Naive thymus-derived CD4-positive, alpha-beta T cell (primary cell): ENCODE measurements at regions of chr4 and their contacts with region 1.

Region 1: GRCh38 chr4:183444214-183445066 is at the start of gene CDKN2AIP:
- DNase-seq: peak; percentile 92 to 97 (median 95)
- ATAC-seq: peak; percentile 93
- H3K4me3 ChIP-seq: peak within 1 kb of the TSS; percentile 81
- H3K4me3 Mint-ChIP-seq: peak within 1 kb of the TSS; percentile 94 to 99 (median 97)
- H3K27ac ChIP-seq: peak within 1 kb of the TSS; percentile 96
- H3K27ac Mint-ChIP-seq: peak within 1 kb of the TSS; percentile 97 to 98 (median 98)
- H3K4me1 ChIP-seq: peaks cover 30 to 33% of the 10 kb centered on the region in 2 donors
- H3K4me1 Mint-ChIP-seq: peaks cover 35 to 66% (median 51%) of the 10 kb centered on the region in 7 donors
- H3K27me3 ChIP-seq: no peaks in the 10 kb centered on the region
- H3K27me3 Mint-ChIP-seq: peaks cover 0 to 5% (median 0%) of the 10 kb centered on the region in 5 donors
- total RNA-seq, gene CDKN2AIP: 24.9 to 58.2 (median 44.4) TPM

Region 2: GRCh38 chr4:182917182-182918043 is 527.0 kb before region 1 on chr4 and contains the start of gene DCTD:
- CTCF ChIA-PET with region 1: no interaction called
- POLR2A ChIA-PET with region 1: interaction called, 5 read pairs
- intact Hi-C with region 1: loop called (anchors 1 to 2 kb)
- DNase-seq: peak; percentile 71 to 90 (median 80)
- ATAC-seq: peak; percentile 89
- H3K4me3 ChIP-seq: peak within 1 kb of the TSS; percentile 77
- H3K4me3 Mint-ChIP-seq: peak within 1 kb of the TSS; percentile 75 to 95 (median 90)
- H3K27ac ChIP-seq: peak within 1 kb of the TSS; percentile 89
- H3K27ac Mint-ChIP-seq: peak within 1 kb of the TSS; percentile 86 to 98 (median 92)
- H3K4me1 ChIP-seq: peaks cover 20 to 26% of the 10 kb centered on the region in 2 donors
- H3K4me1 Mint-ChIP-seq: peaks cover 17 to 58% (median 50%) of the 10 kb centered on the region in 7 donors
- H3K27me3 ChIP-seq: no peaks in the 10 kb centered on the region
- H3K27me3 Mint-ChIP-seq: peaks cover 0 to 6% (median 0%) of the 10 kb centered on the region in 5 donors
- total RNA-seq, gene DCTD: 61.4 to 76.2 (median 68.9) TPM

Region 3: DNA sequence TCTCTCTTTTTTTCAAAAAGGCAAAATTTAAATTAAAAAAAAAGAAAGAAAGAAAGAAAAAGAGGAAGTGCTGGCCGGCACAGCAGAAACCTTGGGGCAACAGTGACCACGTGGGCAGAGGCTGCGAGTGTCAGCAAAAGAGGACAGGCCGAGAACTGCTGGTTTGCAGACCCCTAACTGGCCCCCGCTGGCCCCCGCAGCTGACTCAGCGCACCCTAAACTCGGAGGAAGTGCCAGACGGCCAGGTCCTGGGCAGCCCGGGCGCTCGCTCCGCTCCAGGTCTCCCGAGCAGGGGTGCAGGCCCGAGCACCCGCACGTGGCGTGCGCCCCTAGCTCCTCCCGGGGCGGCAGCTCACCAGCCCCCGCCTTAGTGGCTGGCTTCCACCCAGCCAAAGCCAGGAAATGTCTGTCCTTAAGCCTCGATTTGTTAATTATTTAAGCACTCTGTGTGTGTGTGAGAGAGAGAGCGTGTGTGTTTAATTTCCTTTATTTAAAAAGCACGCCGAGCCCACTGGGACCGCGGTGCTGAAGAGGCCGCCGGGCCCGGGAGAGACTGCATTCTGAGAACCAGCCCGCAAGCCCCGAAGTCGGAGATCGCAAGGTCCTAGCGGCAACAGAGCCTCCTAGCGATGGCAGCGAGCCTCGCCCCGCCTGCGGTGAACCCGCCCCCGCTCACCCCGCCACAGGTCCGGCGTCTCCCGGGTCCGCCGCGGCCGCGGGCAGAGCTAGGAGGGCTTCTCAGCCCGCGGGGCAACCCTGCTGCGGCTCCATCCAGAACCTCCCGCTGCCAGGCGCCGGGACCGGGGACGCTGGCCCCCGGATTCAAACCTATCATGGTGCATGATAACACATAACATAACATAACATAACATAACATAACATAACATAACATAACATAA is 46.0 kb before region 1 on chr4:
- CTCF ChIA-PET with region 1: no interaction called
- POLR2A ChIA-PET with region 1: interaction called, 8 read pairs
- intact Hi-C with region 1: loop called (anchors 2 kb)
- DNase-seq: peak; percentile 32 to 70 (median 57)
- ATAC-seq: peak; percentile 88
- H3K4me3 ChIP-seq: peak overlapping the region; percentile 76
- H3K4me3 Mint-ChIP-seq: peak overlapping the region; percentile 86 to 93 (median 90)
- H3K27ac ChIP-seq: peak overlapping the region; percentile 34
- H3K27ac Mint-ChIP-seq: peak overlapping the region; percentile 65 to 95 (median 82)
- H3K4me1 ChIP-seq: peaks cover 0 to 6% of the 10 kb centered on the region in 2 donors
- H3K4me1 Mint-ChIP-seq: peaks cover 17 to 34% (median 28%) of the 10 kb centered on the region in 7 donors
- H3K27me3 ChIP-seq: no peaks in the 10 kb centered on the region
- H3K27me3 Mint-ChIP-seq: peaks cover 0 to 45% (median 0%) of the 10 kb centered on the region in 5 donors

Region 4: DNA sequence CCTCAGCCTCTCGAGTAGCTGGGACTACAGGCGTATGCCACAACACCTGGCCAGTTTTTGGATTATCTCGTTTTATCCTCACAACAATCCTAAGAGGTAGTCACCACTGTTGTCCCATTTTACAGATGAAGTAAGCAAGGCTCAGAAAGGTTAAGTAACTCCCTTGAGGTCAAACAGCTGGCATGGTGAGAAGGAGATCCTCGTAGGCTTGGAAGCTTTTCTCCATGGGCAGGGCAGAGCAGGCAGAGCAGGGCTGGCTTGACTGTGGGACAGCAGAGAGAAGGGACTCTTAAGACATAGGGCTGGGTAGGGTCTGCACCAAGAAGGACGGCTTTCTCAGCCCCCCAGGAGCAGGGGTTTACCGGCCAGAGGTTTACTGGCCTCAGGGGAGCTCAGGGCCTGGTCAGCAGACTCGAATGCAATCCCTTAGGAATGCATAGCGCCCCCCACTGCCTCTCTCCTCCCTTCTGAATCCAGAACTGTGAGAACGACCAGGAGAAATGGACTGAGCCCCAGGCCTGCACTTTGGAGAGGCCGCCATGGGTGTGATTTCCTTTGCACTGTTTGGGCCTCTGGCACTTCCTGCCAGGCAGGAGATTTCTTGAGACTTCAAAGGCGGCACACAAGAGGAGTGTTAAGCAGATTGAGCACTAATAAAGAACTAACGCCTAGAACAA is 14.0 kb before region 1 on chr4:
- CTCF ChIA-PET with region 1: interaction called, 8 read pairs
- POLR2A ChIA-PET with region 1: interaction called, 170 read pairs
- intact Hi-C with region 1: loop called (anchors 1 kb)
- DNase-seq: peak in 7 of 9 donors; percentile 25 to 51 (median 44)
- ATAC-seq: peak; percentile 68
- H3K4me3 ChIP-seq: peak overlapping the region; percentile 2
- H3K4me3 Mint-ChIP-seq: peak overlapping the region; percentile 63 to 77 (median 74)
- H3K27ac ChIP-seq: peak overlapping the region; percentile 52
- H3K27ac Mint-ChIP-seq: peak overlapping the region; percentile 78 to 95 (median 90)
- H3K4me1 ChIP-seq: peaks cover 16 to 44% of the 10 kb centered on the region in 2 donors
- H3K4me1 Mint-ChIP-seq: peaks cover 12 to 63% (median 51%) of the 10 kb centered on the region in 7 donors
- H3K27me3 ChIP-seq: no peaks in the 10 kb centered on the region
- H3K27me3 Mint-ChIP-seq: no peaks in the 10 kb centered on the region

Region 5: GRCh38 chr4:183471946-183472708 is 27.7 kb after region 1 on chr4:
- CTCF ChIA-PET with region 1: no interaction called
- POLR2A ChIA-PET with region 1: no interaction called
- intact Hi-C with region 1: loop called in 1 of 2 experiments (anchors 2 kb)
- DNase-seq: peak; percentile 51 to 81 (median 71)
- ATAC-seq: peak; percentile 89
- H3K4me3 ChIP-seq: no peak overlapping the region
- H3K4me3 Mint-ChIP-seq: peak overlapping the region in 1 of 10 donors; percentile 8
- H3K27ac ChIP-seq: no peak overlapping the region
- H3K27ac Mint-ChIP-seq: no peak overlapping the region
- H3K4me1 ChIP-seq: no peaks in the 10 kb centered on the region
- H3K4me1 Mint-ChIP-seq: peaks cover 0 to 9% (median 5%) of the 10 kb centered on the region in 7 donors
- H3K27me3 ChIP-seq: no peaks in the 10 kb centered on the region
- H3K27me3 Mint-ChIP-seq: peaks cover 0 to 10% (median 0%) of the 10 kb centered on the region in 5 donors

Region 6: DNA sequence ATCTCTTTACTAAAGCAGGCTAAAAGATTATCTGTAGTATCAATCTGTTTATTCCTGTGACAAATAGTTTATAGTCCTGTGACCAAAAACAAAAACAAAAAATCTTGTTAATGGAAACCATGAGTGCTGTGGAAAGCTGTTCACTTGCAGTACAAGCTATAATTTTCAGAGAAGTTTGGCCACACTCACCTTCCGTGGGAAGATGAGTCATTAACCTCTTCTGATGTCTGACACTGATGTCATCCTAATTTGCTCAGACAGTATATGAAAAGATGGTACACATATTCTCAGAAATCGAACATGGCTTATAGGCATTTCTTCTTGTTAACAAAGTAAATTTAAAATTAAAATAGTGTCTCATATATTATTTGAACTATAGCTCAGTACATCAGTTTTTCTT is 793.2 kb after region 1 on chr4:
- CTCF ChIA-PET with region 1: no interaction called
- POLR2A ChIA-PET with region 1: no interaction called
- intact Hi-C with region 1: loop called in 1 of 2 experiments (anchors 5 kb)
- DNase-seq: peak in 1 of 9 donors; percentile 31
- ATAC-seq: peak; percentile 45
- H3K4me3 ChIP-seq: no peak overlapping the region
- H3K4me3 Mint-ChIP-seq: peak overlapping the region in 1 of 10 donors; percentile 80
- H3K27ac ChIP-seq: no peak overlapping the region
- H3K27ac Mint-ChIP-seq: peak overlapping the region in 4 of 9 donors; percentile 19 to 93 (median 27)
- H3K4me1 ChIP-seq: no peaks in the 10 kb centered on the region
- H3K4me1 Mint-ChIP-seq: peaks cover 0 to 51% (median 8%) of the 10 kb centered on the region in 7 donors
- H3K27me3 ChIP-seq: no peaks in the 10 kb centered on the region
- H3K27me3 Mint-ChIP-seq: no peaks in the 10 kb centered on the region

Region 7: GRCh38 chr4:185395956-185396723 is 1951.7 kb after region 1 on chr4:
- CTCF ChIA-PET with region 1: no interaction called
- POLR2A ChIA-PET with region 1: interaction called, 3 read pairs
- intact Hi-C with region 1: loop called (anchors 5 to 10 kb)
- DNase-seq: peak; percentile 93 to 100 (median 97)
- ATAC-seq: peak; percentile 97
- H3K4me3 ChIP-seq: peak overlapping the region; percentile 69
- H3K4me3 Mint-ChIP-seq: peak overlapping the region; percentile 82 to 100 (median 97)
- H3K27ac ChIP-seq: peak overlapping the region; percentile 97
- H3K27ac Mint-ChIP-seq: peak overlapping the region; percentile 90 to 100 (median 99)
- H3K4me1 ChIP-seq: peaks cover 12 to 15% of the 10 kb centered on the region in 2 donors
- H3K4me1 Mint-ChIP-seq: peaks cover 14 to 57% (median 27%) of the 10 kb centered on the region in 7 donors
- H3K27me3 ChIP-seq: no peaks in the 10 kb centered on the region
- H3K27me3 Mint-ChIP-seq: no peaks in the 10 kb centered on the region